RWPE1 (cell line): ENCODE measurements at regions of chr2 and their contacts with region 1.

Region 1: DNA sequence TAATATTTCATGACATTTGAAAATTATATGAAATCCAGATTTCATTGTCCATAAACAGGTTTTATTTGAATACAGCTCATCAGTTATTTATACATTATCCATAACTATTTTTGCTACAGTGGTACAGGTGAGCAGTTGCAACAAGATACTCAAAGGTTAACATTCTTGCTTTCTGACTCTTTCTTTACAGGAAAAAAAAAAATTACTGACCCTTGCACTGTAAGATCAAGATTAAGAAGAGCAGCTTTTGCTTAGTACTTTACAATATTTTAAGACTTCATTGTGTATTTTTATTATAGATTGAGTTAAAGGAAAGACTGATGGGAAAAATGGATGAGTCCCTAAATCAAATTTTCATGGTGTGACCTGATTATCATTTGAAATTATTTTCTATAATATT is 11.2 kb downstream of the ETAA1 start:
- DNase-seq: no peak
- H3K27ac ChIP-seq: no peak overlapping the region
- CTCF ChIP-seq: no peak

Region 2: DNA sequence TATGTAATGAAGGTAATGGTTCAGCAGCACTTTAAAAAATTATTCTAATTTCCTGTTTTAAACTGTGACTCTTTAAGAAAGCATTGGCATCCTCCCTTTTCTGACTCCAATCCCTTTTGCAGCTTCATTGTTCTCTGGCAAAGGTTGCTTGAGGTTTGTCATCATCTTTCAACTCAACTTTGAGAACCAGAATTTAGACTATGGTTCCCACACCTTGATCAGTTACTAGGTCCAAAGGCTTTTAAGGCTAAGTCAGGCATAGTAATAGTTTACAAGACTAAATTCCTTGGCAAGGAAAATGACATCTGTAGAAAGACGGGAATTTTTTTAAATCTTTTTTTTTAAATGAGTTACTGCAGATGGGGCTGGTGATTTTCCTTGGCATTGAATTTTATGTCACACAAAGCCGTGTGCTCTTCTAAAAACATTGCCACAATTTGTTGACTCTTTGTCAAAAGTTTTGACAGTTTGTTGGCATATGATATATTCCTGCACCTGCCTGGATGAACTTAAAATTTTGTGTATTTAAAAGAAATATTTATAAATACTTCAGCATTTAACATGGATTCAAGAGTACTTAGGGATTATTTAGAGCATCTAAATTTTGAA is 522.5 kb before region 1 on chr2:
- CTCF ChIA-PET with region 1: no interaction called
- POLR2A ChIA-PET with region 1: no interaction called
- DNase-seq: no peak
- H3K27ac ChIP-seq: no peak overlapping the region
- CTCF ChIP-seq: no peak

Region 3: DNA sequence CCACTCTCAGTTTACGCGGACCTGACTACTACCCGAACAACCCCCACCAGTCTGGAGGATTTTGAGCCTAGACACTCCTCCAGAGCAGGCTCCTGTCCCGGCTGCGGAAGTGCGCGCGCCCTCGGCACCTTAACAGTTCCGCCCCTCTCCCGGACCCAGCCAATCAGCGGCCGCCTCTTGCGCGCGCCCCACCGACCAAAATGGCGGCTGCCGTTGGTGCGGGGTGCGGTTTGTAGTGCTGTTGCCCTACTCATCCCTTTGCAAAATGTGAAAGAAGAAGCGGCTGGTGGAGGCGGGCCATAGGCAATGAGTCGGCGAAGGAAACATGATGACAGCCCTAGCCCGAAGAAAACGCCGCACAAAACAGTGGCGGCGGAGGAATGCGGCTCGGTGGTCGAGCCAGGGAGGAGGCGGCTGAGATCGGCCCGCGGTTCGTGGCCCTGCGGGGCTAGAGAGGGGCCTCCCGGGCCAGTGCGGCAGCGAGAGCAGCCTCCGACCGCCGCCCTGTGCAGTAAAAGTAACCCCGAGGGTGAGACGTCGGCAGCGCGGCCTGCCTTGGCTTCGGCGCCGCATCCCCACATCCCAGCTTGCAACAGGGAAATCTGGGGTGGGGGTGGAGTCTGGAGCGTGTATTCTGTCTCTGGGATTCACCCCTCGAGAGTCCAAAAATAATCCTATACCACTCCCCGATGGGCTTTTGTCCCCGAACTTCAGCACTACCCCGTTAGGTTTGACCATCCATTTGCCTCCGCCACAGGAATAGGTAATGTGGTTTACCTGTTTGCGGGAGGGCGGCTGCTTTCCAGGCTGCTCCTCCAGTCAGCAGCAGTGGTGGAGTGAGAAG is 11.0 kb before region 1 on chr2 and contains the start of gene ETAA1:
- CTCF ChIA-PET with region 1: no interaction called
- POLR2A ChIA-PET with region 1: interaction called, 11 read pairs
- DNase-seq: peak; percentile 97
- H3K27ac ChIP-seq: peak within 1 kb of the TSS; percentile 90
- CTCF ChIP-seq: no peak

Region 4: GRCh38 chr2:67733517-67733916 is 325.2 kb after region 1 on chr2:
- CTCF ChIA-PET with region 1: no interaction called
- POLR2A ChIA-PET with region 1: no interaction called
- DNase-seq: peak; percentile 45
- H3K27ac ChIP-seq: no peak overlapping the region
- CTCF ChIP-seq: no peak